CD4-positive, alpha-beta memory T cell (primary cell): ENCODE measurements at regions of chr6 and their contacts with region 1.

Region 1: GRCh38 chr6:25017932-25018567 is 82.3 kb upstream of the RIPOR2 start:
- DNase-seq: peak; percentile 77 to 87 (median 79)
- H3K4me3 ChIP-seq: no peak overlapping the region
- H3K4me3 Mint-ChIP-seq: peak overlapping the region in 5 of 8 donors; percentile 21 to 64 (median 40)
- H3K27ac ChIP-seq: no peak overlapping the region
- H3K27ac Mint-ChIP-seq: peak overlapping the region; percentile 74 to 93 (median 88)
- H3K4me1 ChIP-seq: peaks cover 48% of the 10 kb centered on the region
- H3K4me1 Mint-ChIP-seq: peaks cover 36 to 59% (median 38%) of the 10 kb centered on the region in 4 donors
- H3K27me3 ChIP-seq: no peaks in the 10 kb centered on the region
- H3K27me3 Mint-ChIP-seq: no peaks in the 10 kb centered on the region

Region 2: GRCh38 chr6:24431045-24431451 is 587.0 kb before region 1 on chr6:
- CTCF ChIA-PET with region 1: no interaction called
- POLR2A ChIA-PET with region 1: no interaction called
- intact Hi-C with region 1: loop called (anchors 5 kb)
- DNase-seq: peak in 4 of 5 donors; percentile 15 to 33 (median 28)
- H3K4me3 ChIP-seq: no peak overlapping the region
- H3K4me3 Mint-ChIP-seq: no peak overlapping the region
- H3K27ac ChIP-seq: no peak overlapping the region
- H3K27ac Mint-ChIP-seq: no peak overlapping the region
- H3K4me1 ChIP-seq: no peaks in the 10 kb centered on the region
- H3K4me1 Mint-ChIP-seq: peaks cover 0 to 1% (median 0%) of the 10 kb centered on the region in 4 donors
- H3K27me3 ChIP-seq: no peaks in the 10 kb centered on the region
- H3K27me3 Mint-ChIP-seq: no peaks in the 10 kb centered on the region

Region 3: DNA sequence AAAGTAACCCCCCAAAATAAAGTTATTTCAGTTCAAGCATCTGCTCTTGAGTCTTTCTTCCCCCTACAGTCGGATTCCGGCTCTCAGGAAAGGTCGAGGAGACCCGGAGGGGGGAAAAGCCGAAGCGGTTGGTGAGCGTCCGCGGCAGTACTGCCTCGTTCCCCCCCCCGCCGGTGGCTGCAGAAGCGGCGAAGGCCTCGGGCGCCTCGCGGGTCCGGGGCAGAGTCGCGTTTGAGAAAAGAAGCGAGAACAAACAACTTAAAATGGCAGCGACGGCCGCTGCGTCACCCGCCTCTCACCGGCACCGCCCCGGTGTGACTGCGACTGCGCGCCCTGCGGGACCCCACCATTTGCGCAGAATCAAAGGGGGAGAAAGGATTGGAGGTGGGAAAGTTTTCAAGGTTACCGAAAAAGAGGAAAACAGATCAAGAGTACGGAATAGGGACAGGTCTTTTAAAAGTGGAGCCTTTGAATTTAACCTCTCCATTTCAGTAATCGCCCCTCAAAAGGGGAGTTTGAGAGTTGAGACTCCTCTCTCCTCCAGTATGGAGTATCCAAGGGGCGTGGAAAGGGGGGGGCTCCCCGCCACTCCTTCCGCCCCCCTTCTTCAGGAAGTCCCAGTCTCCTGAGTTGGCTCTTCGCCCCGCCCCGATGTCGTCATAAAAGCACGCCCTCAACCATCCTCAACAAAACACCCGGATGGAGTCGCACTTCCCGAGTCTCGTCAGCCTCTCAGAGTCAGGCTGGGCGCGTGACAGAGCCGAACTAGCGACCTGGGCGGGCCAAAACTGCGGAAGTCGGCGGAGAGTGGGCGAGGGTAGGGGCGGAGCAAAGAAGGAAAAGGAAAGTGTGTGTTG is 297.2 kb before region 1 on chr6:
- CTCF ChIA-PET with region 1: interaction called, 10 read pairs
- POLR2A ChIA-PET with region 1: interaction called, 5 read pairs
- intact Hi-C with region 1: loop called (anchors 1 kb)
- DNase-seq: peak; percentile 100
- H3K4me3 ChIP-seq: peak overlapping the region; percentile 68 to 95
- H3K4me3 Mint-ChIP-seq: peak overlapping the region; percentile 91 to 100 (median 97)
- H3K27ac ChIP-seq: peak overlapping the region; percentile 100
- H3K27ac Mint-ChIP-seq: peak overlapping the region; percentile 90 to 100 (median 99)
- H3K4me1 ChIP-seq: peaks cover 38% of the 10 kb centered on the region
- H3K4me1 Mint-ChIP-seq: peaks cover 33 to 56% (median 40%) of the 10 kb centered on the region in 4 donors
- H3K27me3 ChIP-seq: no peaks in the 10 kb centered on the region
- H3K27me3 Mint-ChIP-seq: no peaks in the 10 kb centered on the region

Region 4: GRCh38 chr6:24848461-24848860 is 169.6 kb before region 1 on chr6:
- CTCF ChIA-PET with region 1: interaction called, 177 read pairs
- POLR2A ChIA-PET with region 1: interaction called, 8 read pairs
- intact Hi-C with region 1: no loop called
- DNase-seq: no peak
- H3K4me3 ChIP-seq: no peak overlapping the region
- H3K4me3 Mint-ChIP-seq: no peak overlapping the region
- H3K27ac ChIP-seq: no peak overlapping the region
- H3K27ac Mint-ChIP-seq: peak overlapping the region; percentile 12 to 84 (median 42)
- H3K4me1 ChIP-seq: peaks cover 25% of the 10 kb centered on the region
- H3K4me1 Mint-ChIP-seq: peaks cover 27 to 47% (median 34%) of the 10 kb centered on the region in 4 donors
- H3K27me3 ChIP-seq: no peaks in the 10 kb centered on the region
- H3K27me3 Mint-ChIP-seq: no peaks in the 10 kb centered on the region

Region 5: GRCh38 chr6:24910961-24911712 is 106.9 kb before region 1 on chr6:
- CTCF ChIA-PET with region 1: interaction called, 14 read pairs
- POLR2A ChIA-PET with region 1: interaction called, 13 read pairs
- intact Hi-C with region 1: no loop called
- DNase-seq: peak in 3 of 5 donors; percentile 41 to 65 (median 44)
- H3K4me3 ChIP-seq: peak overlapping the region; percentile 1 to 54
- H3K4me3 Mint-ChIP-seq: peak overlapping the region; percentile 87 to 98 (median 93)
- H3K27ac ChIP-seq: peak overlapping the region; percentile 70
- H3K27ac Mint-ChIP-seq: peak overlapping the region; percentile 87 to 99 (median 96)
- H3K4me1 ChIP-seq: peaks cover 94% of the 10 kb centered on the region
- H3K4me1 Mint-ChIP-seq: peaks cover 83 to 99% (median 91%) of the 10 kb centered on the region in 4 donors
- H3K27me3 ChIP-seq: no peaks in the 10 kb centered on the region
- H3K27me3 Mint-ChIP-seq: no peaks in the 10 kb centered on the region

Region 6: GRCh38 chr6:25042036-25042521 is 24.0 kb after region 1 on chr6:
- CTCF ChIA-PET with region 1: interaction called, 13 read pairs
- POLR2A ChIA-PET with region 1: interaction called, 4 read pairs
- intact Hi-C with region 1: no loop called
- DNase-seq: peak; percentile 59 to 86 (median 65)
- H3K4me3 ChIP-seq: peak overlapping the region; percentile 67 to 82
- H3K4me3 Mint-ChIP-seq: peak overlapping the region; percentile 95 to 99 (median 96)
- H3K27ac ChIP-seq: peak overlapping the region; percentile 93
- H3K27ac Mint-ChIP-seq: peak overlapping the region; percentile 94 to 100 (median 98)
- H3K4me1 ChIP-seq: peaks cover 63% of the 10 kb centered on the region
- H3K4me1 Mint-ChIP-seq: peaks cover 50 to 85% (median 63%) of the 10 kb centered on the region in 4 donors
- H3K27me3 ChIP-seq: no peaks in the 10 kb centered on the region
- H3K27me3 Mint-ChIP-seq: no peaks in the 10 kb centered on the region

Region 7: GRCh38 chr6:25458485-25458884 is 440.4 kb after region 1 on chr6:
- CTCF ChIA-PET with region 1: no interaction called
- POLR2A ChIA-PET with region 1: no interaction called
- intact Hi-C with region 1: no loop called
- DNase-seq: no peak
- H3K4me3 ChIP-seq: no peak overlapping the region
- H3K4me3 Mint-ChIP-seq: no peak overlapping the region
- H3K27ac ChIP-seq: no peak overlapping the region
- H3K27ac Mint-ChIP-seq: no peak overlapping the region
- H3K4me1 ChIP-seq: no peaks in the 10 kb centered on the region
- H3K4me1 Mint-ChIP-seq: peaks cover 0 to under 1% (median 0%) of the 10 kb centered on the region in 4 donors
- H3K27me3 ChIP-seq: no peaks in the 10 kb centered on the region
- H3K27me3 Mint-ChIP-seq: no peaks in the 10 kb centered on the region